Activated CD8-positive, alpha-beta memory T cell treated with anti-CD3 and anti-CD28 coated beads, Interleukin-2, amount 10 ng/mL, durations not matched to agents 7 days and 5 days (primary cell): ENCODE measurements at regions of chr16 and their contacts with region 1.

Region 1: DNA sequence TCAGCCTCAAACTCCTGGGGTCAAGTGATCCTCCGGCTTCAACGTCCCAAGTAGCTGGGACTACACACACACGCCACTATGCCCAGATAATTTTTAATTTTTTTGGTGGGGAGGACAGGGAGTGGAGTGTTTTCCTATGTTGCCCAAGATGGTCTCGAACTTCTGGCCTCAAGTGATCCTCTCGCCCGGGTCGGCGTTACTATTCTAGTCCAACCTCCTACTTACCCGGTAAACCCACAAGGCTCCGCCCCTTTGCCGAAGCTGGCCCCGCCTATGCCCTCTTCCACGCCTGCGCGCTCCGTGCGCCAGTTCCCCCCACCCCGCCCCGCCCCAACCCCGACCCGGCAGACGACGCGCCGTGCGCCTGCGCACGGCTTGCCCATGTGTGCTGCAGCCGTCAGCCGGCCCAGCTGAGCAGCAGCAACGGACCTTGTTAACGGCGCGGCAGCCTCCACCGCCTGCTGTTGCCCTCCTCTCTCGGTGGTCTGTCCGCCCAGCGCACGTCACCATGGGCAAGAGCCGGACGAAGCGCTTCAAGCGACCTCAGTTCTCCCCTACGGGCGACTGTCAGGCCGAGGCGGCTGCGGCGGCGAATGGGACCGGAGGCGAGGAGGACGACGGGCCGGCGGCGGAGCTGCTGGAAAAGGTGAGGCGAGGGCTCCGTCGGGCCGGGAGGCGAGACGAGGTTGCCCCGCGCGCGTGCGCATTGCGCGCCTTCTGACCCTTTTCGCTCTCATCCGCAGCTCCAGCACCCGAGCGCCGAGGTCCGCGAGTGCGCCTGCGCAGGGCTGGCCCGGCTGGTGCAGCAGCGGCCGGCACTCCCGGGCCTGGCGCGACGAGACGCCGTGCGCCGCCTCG is at the start of gene HEATR3:
- DNase-seq: peak; percentile 96
- ATAC-seq: peak; percentile 91
- H3K4me3 Mint-ChIP-seq: peak within 1 kb of the TSS; percentile 97
- H3K27ac Mint-ChIP-seq: peak within 1 kb of the TSS; percentile 91
- H3K4me1 Mint-ChIP-seq: peaks cover 40% of the 10 kb centered on the region
- H3K27me3 Mint-ChIP-seq: no peaks in the 10 kb centered on the region
- total RNA-seq, gene HEATR3: 24.3 to 26.1 TPM

Region 2: GRCh38 chr16:50121721-50122445 is 56.0 kb after region 1 on chr16:
- CTCF ChIA-PET with region 1: interaction called, 14 read pairs
- DNase-seq: peak; percentile 67
- ATAC-seq: peak; percentile 68
- H3K4me3 Mint-ChIP-seq: peak overlapping the region; percentile 4
- H3K27ac Mint-ChIP-seq: peak overlapping the region; percentile 79
- H3K4me1 Mint-ChIP-seq: peaks cover 34% of the 10 kb centered on the region
- H3K27me3 Mint-ChIP-seq: no peaks in the 10 kb centered on the region

Region 3: DNA sequence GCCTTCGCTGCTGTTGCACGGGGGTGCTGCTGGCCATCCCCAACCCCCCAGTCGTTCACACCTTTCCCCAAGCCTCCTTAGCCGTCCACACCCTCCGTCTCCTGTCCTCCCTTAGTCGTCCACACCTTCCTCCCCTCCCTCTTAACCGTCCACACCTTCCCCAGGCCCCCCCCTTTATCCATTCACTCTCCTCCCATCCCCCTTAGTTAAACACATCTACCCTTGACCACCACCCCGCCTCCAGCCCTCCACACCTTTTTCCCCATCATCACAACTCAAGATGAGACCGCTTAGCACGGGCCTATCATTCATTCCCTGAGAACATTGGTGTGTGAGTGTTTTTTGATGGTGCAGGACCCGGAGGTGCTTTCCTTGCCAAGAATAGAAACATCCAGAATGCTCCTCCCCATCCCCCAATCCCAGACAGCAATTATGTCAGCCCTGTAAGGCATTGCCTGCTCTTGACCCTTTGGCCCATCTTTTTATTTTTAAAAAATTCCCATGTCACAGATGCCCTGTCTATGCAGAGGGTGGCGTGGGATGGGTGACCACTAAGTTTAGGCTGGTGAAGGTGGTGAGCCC is 88.6 kb after region 1 on chr16:
- CTCF ChIA-PET with region 1: interaction called, 14 read pairs
- DNase-seq: peak; percentile 44
- ATAC-seq: no peak
- H3K4me3 Mint-ChIP-seq: peak overlapping the region; percentile 80
- H3K27ac Mint-ChIP-seq: peak overlapping the region; percentile 69
- H3K4me1 Mint-ChIP-seq: peaks cover 43% of the 10 kb centered on the region
- H3K27me3 Mint-ChIP-seq: no peaks in the 10 kb centered on the region